ENCODE measurements at regions of chr12 and their contacts with region 1.

Region 1: DNA sequence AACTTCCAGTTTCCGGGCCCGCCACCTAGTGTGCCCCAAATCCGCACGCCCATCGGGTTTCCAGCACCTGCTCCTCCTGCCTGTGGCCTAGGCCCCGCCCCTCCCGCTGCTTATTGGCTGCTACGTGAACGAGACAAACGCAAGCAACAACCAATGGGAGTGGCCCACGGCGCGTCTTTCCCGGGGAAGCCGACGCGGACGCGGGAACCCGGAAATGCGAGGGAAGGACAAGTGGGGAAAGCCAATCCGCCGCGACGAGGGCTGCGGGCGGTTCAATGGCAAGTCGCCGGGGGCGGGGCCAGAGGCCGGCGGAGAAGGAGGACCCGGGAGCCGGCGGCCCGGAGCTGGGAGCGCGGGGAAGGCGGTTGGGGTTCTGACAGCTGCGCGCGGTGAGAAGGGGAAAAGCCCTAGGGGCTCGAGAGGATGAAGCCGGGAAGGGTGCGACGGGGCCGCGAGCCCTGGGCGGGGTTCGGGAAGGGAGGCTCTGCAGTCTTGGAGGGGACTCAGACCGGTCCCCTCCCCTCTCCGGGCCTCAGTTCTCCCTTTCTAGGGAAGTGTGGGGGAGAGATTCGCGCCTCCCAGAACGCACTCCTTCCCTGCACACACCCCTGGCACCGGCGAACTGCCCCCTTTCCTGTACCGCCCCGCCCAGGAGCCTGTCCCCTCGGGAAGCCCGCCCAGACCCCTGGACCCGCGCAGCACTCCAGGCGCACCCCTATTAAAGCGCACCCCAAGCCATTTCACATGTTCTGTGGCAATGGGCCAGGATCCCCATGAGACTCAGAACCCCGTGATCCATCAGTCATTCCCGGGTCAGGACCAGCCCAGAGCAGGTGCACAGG is at the start of gene FICD:
- DNase-seq: peak; percentile 98 to 100 (median 99)
- H3K4me3 ChIP-seq: peak within 1 kb of the TSS; percentile 84 to 90
- H3K4me3 Mint-ChIP-seq: peak within 1 kb of the TSS; percentile 91 to 97 (median 94)
- H3K27ac ChIP-seq: peak within 1 kb of the TSS; percentile 86
- H3K27ac Mint-ChIP-seq: peak within 1 kb of the TSS; percentile 90 to 97 (median 95)
- H3K4me1 ChIP-seq: peaks cover 27% of the 10 kb centered on the region
- H3K4me1 Mint-ChIP-seq: peaks cover 16 to 42% (median 28%) of the 10 kb centered on the region in 4 donors
- H3K27me3 ChIP-seq: no peaks in the 10 kb centered on the region
- H3K27me3 Mint-ChIP-seq: peaks cover 1% of the 10 kb centered on the region in 2 donors
- total RNA-seq, gene FICD: 10.6 to 12.3 TPM

Region 2: DNA sequence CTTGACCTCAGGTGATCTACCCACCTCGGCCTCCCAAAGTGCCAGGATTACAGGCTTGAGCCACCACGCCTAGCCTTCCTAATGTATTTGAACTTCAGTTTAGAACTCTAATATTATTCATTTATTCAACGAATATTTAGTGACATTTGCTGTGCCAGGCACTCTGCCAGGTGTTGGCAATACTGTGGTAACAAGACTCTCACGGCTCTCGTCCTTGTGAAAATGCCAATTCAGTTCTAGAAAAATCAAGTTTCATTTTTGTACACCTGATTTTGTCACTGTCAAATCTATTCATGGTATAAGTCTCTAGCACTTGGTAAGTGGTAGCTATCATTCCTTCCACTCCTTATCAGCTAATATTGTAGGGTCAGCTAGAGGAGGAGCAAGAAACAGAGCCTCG is 835.9 kb before region 1 on chr12:
- CTCF ChIA-PET with region 1: interaction called, 6 read pairs
- POLR2A ChIA-PET with region 1: no interaction called
- intact Hi-C with region 1: loop called (anchors 2 kb)
- DNase-seq: no peak
- H3K4me3 ChIP-seq: no peak overlapping the region
- H3K4me3 Mint-ChIP-seq: no peak overlapping the region
- H3K27ac ChIP-seq: no peak overlapping the region
- H3K27ac Mint-ChIP-seq: no peak overlapping the region
- H3K4me1 ChIP-seq: peaks cover under 1% of the 10 kb centered on the region
- H3K4me1 Mint-ChIP-seq: peaks cover 0 to 3% (median 1%) of the 10 kb centered on the region in 4 donors
- H3K27me3 ChIP-seq: no peaks in the 10 kb centered on the region
- H3K27me3 Mint-ChIP-seq: peaks cover 4 to 17% of the 10 kb centered on the region in 2 donors

Region 3: DNA sequence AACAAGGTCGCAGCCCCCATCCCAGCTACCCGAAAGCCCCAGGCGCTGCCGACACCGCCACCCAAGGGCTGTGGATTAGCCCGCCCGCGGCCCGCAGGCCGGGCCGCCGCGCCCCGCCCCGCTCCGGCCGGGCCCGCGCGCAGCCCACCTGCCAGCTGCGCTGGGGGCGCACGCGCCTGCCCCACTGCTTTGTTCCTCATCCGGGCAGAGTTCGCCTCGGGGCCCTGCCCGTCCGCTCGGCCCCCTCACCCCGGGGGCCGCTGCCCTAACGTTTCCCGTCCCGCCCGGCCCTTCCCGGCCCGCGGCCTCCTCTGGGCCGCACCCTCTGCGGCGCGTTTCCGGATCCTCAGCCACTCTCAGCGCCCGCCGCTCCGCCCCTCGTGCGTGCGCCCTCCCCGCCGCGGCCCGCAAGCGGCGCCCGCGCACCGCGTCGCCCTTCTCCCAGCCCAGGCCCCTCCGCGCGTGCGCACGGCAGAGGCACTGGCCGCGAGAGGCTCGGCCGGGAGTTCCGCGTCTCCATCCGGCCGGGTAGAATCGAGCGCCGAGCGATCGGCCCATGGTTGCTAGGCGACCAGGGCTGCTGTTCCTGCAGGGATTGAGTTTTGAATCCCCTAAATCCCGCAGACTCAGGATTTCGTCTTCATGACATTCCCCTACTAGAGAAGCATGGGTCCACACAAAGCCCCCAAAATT is 754.2 kb before region 1 on chr12 and contains the start of gene PRDM4:
- CTCF ChIA-PET with region 1: no interaction called
- POLR2A ChIA-PET with region 1: no interaction called
- intact Hi-C with region 1: loop called (anchors 1 kb)
- DNase-seq: peak; percentile 87 to 94 (median 93)
- H3K4me3 ChIP-seq: peak within 1 kb of the TSS; percentile 77 to 82
- H3K4me3 Mint-ChIP-seq: peak within 1 kb of the TSS; percentile 89 to 95 (median 92)
- H3K27ac ChIP-seq: peak within 1 kb of the TSS; percentile 64
- H3K27ac Mint-ChIP-seq: peak within 1 kb of the TSS; percentile 90 to 98 (median 94)
- H3K4me1 ChIP-seq: peaks cover 41% of the 10 kb centered on the region
- H3K4me1 Mint-ChIP-seq: peaks cover 17 to 45% (median 26%) of the 10 kb centered on the region in 4 donors
- H3K27me3 ChIP-seq: no peaks in the 10 kb centered on the region
- H3K27me3 Mint-ChIP-seq: no peaks in the 10 kb centered on the region
- total RNA-seq, gene PRDM4: 35.8 to 38.3 TPM

Region 4: GRCh38 chr12:108066583-108067577 is 448.3 kb before region 1 on chr12:
- CTCF ChIA-PET with region 1: no interaction called
- POLR2A ChIA-PET with region 1: no interaction called
- intact Hi-C with region 1: no loop called
- DNase-seq: no peak
- H3K4me3 ChIP-seq: no peak overlapping the region
- H3K4me3 Mint-ChIP-seq: no peak overlapping the region
- H3K27ac ChIP-seq: no peak overlapping the region
- H3K27ac Mint-ChIP-seq: peak overlapping the region in 1 of 7 donors; percentile 73
- H3K4me1 ChIP-seq: no peaks in the 10 kb centered on the region
- H3K4me1 Mint-ChIP-seq: no peaks in the 10 kb centered on the region
- H3K27me3 ChIP-seq: no peaks in the 10 kb centered on the region
- H3K27me3 Mint-ChIP-seq: peaks cover 14 to 23% of the 10 kb centered on the region in 2 donors

Region 5: DNA sequence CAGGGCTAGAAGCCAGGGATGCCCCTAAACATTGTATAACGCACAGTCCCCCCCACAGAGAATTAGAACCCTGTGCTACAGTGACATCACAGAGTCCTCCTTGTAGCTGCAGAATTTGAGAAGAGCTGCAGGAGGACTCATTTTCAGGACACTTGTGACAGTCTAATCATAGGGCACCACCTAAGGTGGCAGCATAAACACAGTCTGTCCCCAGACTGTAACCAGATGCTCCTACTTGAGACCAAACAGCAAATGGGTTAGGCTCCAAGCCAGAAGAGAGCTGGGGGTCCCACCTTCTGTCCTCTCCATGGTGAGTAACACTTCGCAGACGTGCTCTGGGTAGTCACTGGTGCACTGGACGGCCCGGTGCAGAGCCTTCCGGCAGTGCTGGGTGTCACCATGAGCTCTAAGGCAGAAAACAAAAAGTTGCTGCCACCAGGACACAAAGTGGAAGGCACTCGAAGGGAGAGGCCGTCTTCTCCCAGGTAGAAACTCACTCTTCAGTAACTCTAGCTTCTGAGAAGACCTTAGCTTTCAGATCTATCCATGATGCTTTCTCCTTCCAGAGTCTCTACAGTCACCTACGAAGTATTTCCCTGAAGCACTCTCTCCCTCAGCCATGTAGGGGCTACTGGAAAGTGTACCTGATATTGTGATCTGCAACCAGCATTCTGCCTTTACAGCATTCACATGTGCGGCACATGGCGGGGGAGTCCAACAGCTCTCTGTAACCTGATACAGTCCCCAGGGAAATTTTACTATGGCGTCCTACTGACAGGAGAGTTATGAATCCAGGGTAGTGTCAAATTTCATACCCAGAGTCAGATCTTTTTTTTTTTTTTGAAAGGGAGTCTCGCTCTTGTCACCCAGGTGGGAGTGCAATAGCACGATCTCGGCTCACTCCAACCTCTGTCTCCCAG is 17.0 kb after region 1 on chr12:
- CTCF ChIA-PET with region 1: interaction called, 14 read pairs
- POLR2A ChIA-PET with region 1: interaction called, 3 read pairs
- intact Hi-C with region 1: no loop called
- DNase-seq: no peak
- H3K4me3 ChIP-seq: no peak overlapping the region
- H3K4me3 Mint-ChIP-seq: no peak overlapping the region
- H3K27ac ChIP-seq: no peak overlapping the region
- H3K27ac Mint-ChIP-seq: peak overlapping the region in 1 of 7 donors; percentile 19
- H3K4me1 ChIP-seq: no peaks in the 10 kb centered on the region
- H3K4me1 Mint-ChIP-seq: peaks cover 0 to 7% (median 0%) of the 10 kb centered on the region in 4 donors
- H3K27me3 ChIP-seq: no peaks in the 10 kb centered on the region
- H3K27me3 Mint-ChIP-seq: no peaks in the 10 kb centered on the region

Region 6: GRCh38 chr12:108583991-108584390 is 68.8 kb after region 1 on chr12:
- CTCF ChIA-PET with region 1: no interaction called
- POLR2A ChIA-PET with region 1: no interaction called
- intact Hi-C with region 1: no loop called
- DNase-seq: no peak
- H3K4me3 ChIP-seq: no peak overlapping the region
- H3K4me3 Mint-ChIP-seq: no peak overlapping the region
- H3K27ac ChIP-seq: no peak overlapping the region
- H3K27ac Mint-ChIP-seq: no peak overlapping the region
- H3K4me1 ChIP-seq: no peaks in the 10 kb centered on the region
- H3K4me1 Mint-ChIP-seq: peaks cover 0 to 1% (median under 1%) of the 10 kb centered on the region in 4 donors
- H3K27me3 ChIP-seq: no peaks in the 10 kb centered on the region
- H3K27me3 Mint-ChIP-seq: peaks cover 0 to 1% of the 10 kb centered on the region in 2 donors

Region 7: DNA sequence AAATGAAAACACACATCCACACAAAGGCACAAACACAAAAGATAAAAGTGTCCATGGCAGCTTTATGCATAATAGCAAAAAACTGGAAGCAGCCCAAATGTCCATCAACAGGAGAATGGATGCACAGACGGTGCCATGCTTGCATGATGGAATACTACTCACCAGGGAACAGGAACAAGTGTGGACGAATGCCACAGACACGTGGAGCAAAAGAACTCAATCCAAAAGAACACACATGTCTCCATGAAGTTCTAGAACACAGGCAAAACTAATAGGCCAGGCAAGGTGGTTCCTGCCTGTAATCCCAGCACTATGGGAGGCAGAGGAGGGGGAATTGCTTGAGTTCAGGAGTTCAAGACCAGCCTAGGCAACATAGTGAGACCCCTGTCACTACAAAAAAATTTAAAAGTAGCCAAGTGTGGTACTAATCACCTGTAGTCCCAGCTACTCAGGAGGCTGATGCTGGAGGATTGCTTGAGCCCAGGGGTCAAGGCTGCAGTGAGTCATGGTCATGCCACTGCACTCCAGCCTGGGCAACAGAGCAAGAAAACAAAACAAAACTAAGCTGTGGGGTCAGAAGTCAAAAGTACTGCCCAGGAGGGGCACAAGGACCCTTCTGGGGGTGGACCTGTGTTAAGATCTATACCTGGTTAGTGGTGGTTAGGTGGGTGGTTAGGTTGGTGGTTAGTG is 90.0 kb after region 1 on chr12:
- CTCF ChIA-PET with region 1: no interaction called
- POLR2A ChIA-PET with region 1: no interaction called
- intact Hi-C with region 1: no loop called
- DNase-seq: no peak
- H3K4me3 ChIP-seq: no peak overlapping the region
- H3K4me3 Mint-ChIP-seq: no peak overlapping the region
- H3K27ac ChIP-seq: no peak overlapping the region
- H3K27ac Mint-ChIP-seq: peak overlapping the region in 1 of 7 donors; percentile 24
- H3K4me1 ChIP-seq: no peaks in the 10 kb centered on the region
- H3K4me1 Mint-ChIP-seq: no peaks in the 10 kb centered on the region
- H3K27me3 ChIP-seq: no peaks in the 10 kb centered on the region
- H3K27me3 Mint-ChIP-seq: no peaks in the 10 kb centered on the region

Region 8: GRCh38 chr12:108731105-108731865 is 216.1 kb after region 1 on chr12 and contains the start of gene CORO1C:
- CTCF ChIA-PET with region 1: no interaction called
- POLR2A ChIA-PET with region 1: no interaction called
- intact Hi-C with region 1: loop called (anchors 2 kb)
- DNase-seq: peak; percentile 94 to 97 (median 95)
- H3K4me3 ChIP-seq: peak within 1 kb of the TSS; percentile 88 to 91
- H3K4me3 Mint-ChIP-seq: peak within 1 kb of the TSS; percentile 89 to 97 (median 95)
- H3K27ac ChIP-seq: peak within 1 kb of the TSS; percentile 69
- H3K27ac Mint-ChIP-seq: peak within 1 kb of the TSS; percentile 92 to 99 (median 98)
- H3K4me1 ChIP-seq: peaks cover 5% of the 10 kb centered on the region
- H3K4me1 Mint-ChIP-seq: peaks cover 11 to 28% (median 26%) of the 10 kb centered on the region in 4 donors
- H3K27me3 ChIP-seq: no peaks in the 10 kb centered on the region
- H3K27me3 Mint-ChIP-seq: no peaks in the 10 kb centered on the region
- total RNA-seq, gene CORO1C: 10.3 to 11.9 TPM

Region 9: DNA sequence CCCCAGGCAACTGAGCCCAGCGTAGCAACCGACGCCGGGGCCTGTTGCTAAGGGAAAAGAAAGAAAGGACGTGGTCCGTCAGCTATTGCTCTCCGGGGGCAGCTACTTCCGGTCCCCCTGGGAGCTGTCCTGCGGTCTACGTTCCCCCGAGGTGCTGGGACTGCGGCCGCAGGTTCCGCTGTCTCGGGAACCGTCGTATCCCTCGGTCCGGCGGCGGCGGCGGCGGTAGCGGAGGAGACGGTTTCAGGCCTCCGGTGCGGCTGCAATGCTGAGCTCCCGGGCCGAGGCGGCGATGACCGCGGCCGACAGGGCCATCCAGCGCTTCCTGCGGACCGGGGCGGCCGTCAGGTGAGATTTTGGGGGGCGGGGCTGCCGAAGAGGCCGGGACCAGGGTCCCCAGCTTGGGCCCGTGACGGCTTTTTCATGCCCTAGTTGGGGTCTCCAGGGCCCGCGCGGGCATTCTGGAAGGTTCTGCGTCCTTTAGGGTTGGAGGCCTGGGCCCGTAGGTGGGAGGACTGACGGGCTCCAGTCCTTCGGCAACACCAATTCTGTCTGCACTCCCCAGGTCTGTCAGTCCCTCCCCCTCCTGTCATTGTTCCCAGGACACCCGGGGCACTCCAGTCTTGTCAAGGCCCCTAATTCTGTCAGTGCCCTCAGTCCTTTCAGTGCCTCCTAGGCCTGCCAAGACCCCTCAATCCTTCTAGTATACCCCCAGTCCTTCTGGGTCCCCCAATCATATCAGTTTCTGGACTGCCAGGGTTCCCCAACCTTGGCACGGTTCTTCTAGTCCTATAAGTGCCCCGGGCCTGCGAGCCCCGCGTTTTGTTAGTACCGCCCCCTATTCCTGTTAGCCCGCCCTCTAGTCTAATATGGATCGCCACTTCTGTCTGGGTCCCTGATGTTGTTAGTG is 537.5 kb after region 1 on chr12 and contains the start of gene USP30:
- CTCF ChIA-PET with region 1: no interaction called
- POLR2A ChIA-PET with region 1: no interaction called
- intact Hi-C with region 1: loop called (anchors 5 kb)
- DNase-seq: peak; percentile 75 to 83 (median 79)
- H3K4me3 ChIP-seq: peak within 1 kb of the TSS; percentile 87 to 96
- H3K4me3 Mint-ChIP-seq: peak within 1 kb of the TSS; percentile 93 to 100 (median 96)
- H3K27ac ChIP-seq: peak within 1 kb of the TSS; percentile 85
- H3K27ac Mint-ChIP-seq: peak within 1 kb of the TSS; percentile 87 to 100 (median 98)
- H3K4me1 ChIP-seq: peaks cover 18% of the 10 kb centered on the region
- H3K4me1 Mint-ChIP-seq: peaks cover 10 to 27% (median 17%) of the 10 kb centered on the region in 4 donors
- H3K27me3 ChIP-seq: no peaks in the 10 kb centered on the region
- H3K27me3 Mint-ChIP-seq: no peaks in the 10 kb centered on the region
- total RNA-seq, gene USP30: 8.1 to 14.2 TPM